Left cardiac atrium (tissue), 4 donors: ENCODE measurements at regions of chr13 and their contacts with region 1.

Region 1: DNA sequence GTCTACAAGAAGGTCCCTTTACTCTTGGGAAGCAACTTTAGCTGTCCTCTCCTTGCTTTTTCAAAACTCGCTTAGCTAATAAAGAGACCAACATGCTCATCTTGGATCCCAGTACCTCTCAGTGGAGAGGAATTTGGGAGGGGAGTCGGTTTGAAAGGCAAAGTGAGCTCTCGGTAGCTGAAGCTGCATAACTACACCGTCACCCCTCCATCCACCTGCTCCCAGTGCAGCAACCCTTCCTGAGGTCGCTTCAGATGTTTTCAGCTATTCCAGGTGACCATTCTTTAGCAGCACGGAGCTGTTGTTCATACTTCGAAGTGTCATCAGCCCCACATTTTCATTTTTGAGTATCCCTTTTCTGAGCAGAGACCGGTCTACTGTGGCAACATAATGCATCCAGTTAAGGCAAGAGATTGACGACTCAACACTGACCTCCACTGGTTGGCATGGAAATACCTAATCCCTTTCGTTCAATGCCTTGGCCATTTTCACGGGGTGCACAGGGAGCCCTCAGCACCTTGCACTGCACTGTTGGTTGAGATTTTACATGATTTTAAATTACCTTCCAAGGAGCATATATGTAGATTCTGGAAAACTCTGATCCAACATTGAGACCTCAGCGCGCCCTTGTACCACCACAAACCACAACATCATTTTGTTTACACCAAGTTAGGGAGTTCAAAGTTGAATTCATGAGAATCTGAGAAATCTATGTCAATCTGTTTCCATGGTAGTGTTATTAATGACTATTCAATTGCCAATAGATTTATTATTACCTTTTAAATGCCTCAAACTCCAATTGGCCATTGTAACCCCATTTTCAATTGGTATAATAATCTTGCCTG is 42.2 kb downstream of the DLEU7 start:
- DNase-seq: peak; percentile 35
- ATAC-seq: peak; percentile 93 to 94

Region 2: DNA sequence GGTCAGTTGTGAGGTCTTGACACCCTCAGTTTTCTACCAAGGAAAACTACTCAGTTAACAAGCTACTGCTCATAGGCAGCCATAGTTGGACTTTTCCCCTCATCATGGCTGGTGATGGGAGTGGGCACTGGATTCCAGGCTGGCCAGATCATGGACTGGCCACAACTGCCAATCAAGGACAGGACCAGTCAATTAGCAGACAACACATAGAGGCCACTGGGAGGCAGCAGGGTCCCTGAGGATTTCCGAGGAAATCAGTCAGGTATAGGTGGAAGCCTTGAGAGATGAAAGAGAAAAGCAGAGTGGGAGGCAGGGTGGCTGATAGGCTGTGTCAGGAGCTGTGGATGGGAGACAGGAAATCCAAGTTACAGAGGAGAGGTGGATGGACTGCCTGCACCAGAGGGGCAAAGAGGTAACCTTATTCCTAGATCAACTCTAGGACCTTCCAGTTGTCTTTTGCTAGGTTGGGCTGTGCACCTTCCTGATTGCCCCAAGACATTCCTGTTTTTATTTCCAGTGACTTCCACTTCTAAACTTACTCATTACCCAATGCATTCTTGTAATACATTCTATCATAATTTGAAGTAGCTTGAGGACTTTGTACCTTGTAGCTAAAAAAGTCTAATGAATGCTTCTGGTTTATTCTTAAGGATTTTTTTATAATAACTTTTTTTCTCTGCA is 424.3 kb before region 1 on chr13:
- intact Hi-C with region 1: loop called in 1 of 2 experiments (anchors 5 kb)
- DNase-seq: no peak
- ATAC-seq: no peak

Region 3: DNA sequence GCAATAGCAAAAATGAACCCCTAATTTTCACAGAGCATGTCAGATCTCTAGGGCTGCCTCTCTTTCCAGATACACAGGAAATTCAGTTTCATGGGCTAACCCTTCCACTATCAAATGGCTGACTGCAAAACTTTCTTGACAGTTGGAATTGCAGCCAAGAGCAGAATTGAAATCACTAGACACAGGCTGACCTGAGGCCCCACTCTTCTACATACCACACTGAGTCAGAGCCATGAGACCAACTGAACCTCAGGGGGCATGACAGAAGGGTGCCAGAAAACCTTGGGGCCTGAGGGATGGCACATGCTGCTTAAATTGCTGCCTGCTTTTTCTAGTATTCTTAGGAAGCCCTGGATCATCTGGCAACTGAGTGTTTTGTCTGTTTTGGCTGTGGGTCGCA is 43.9 kb after region 1 on chr13:
- intact Hi-C with region 1: no loop called
- DNase-seq: no peak
- ATAC-seq: no peak

Region 4: DNA sequence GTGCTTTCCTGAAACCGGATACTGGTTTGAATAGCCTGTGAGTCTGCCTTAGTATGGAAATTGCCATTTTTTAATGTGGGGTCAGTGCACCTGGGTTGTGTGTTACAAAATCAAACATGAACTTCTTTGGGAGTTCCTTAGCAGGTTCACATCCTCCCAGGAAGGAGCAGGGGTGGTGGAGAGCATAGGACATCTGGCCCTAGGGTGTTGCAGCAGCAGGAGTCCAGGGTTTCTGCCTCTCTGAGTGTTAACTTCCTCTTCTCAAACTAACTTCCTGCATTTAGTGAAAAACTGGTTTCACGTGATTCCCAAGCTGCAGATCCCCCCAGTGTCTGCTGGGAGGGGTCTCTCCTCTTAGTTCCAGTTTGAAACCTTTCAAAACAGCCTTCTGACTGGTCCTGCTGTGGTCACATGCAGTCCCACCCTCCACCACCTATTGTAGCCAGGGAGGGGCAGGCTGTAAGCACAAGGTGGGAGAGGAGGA is 115.4 kb after region 1 on chr13:
- intact Hi-C with region 1: no loop called
- DNase-seq: no peak
- ATAC-seq: peak; percentile 24 to 55

Region 5: GRCh38 chr13:51015973-51016372 is 214.7 kb after region 1 on chr13:
- intact Hi-C with region 1: no loop called
- DNase-seq: no peak
- ATAC-seq: no peak